ENCODE measurements at regions of chr22 and their contacts with region 1.

Region 1: GRCh38 chr22:46592390-46592872 is 27.8 kb upstream of the GRAMD4 start:
- DNase-seq: peak; percentile 80
- ATAC-seq: peak; percentile 37
- H3K4me3 ChIP-seq: peak overlapping the region; percentile 5 to 78 (median 51)
- H3K4me3 Mint-ChIP-seq: peak overlapping the region; percentile 92
- H3K27ac ChIP-seq: peak overlapping the region; percentile 70 to 75
- H3K27ac Mint-ChIP-seq: peak overlapping the region; percentile 93
- H3K4me1 ChIP-seq: peaks cover 52 to 81% of the 10 kb centered on the region in 2 donors
- H3K4me1 Mint-ChIP-seq: peaks cover 62% of the 10 kb centered on the region
- H3K27me3 ChIP-seq: no peaks in the 10 kb centered on the region
- H3K27me3 Mint-ChIP-seq: no peaks in the 10 kb centered on the region
- CTCF ChIP-seq: no peak

Region 2: DNA sequence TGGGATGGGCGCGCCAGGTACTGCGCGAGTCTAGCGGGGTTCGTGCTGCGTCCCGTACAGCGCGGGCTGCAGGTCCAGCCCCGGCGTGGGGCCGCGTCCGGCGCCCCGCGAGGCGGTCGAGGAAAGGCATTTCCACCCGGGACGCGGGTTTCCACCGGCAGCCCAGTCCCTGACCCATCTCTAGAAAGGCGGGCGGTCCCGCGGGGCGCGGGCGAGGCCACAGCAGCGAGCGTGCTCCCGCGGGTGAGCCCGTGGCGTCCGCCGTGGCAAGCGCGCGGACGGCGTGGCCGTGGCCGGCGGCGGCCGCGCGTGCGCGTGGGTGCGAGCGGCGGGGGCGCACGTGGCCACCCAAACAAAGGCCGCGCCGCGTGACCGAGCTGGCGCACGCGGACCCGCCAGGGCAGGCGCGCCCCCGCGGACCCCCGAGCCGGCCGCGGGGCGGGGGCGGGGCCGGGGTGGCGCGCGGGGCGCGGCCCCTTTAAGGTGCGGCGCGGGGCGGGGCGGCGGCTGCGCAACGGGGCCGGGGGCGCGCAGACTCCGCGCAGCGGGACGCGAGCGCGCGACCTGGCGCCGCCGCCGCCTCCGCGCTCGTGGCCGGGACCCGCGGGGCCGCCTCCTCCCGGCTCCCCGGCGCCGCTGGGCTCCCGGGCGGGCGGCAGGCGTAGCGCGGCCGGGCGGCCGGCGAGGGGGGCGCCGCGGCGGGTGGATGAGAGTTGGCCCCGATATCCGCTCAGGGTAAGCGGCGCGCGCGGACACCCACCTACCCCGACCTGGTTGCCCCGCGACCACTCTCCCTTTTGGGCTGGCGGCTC is 15.7 kb before region 1 on chr22:
- CTCF ChIA-PET with region 1: no interaction called
- POLR2A ChIA-PET with region 1: interaction called, 4 read pairs
- intact Hi-C with region 1: loop called (anchors 1 kb)
- DNase-seq: peak; percentile 79
- ATAC-seq: peak; percentile 76
- H3K4me3 ChIP-seq: peak overlapping the region in 4 of 5 experiments; percentile 52 to 64 (median 61)
- H3K4me3 Mint-ChIP-seq: peak overlapping the region; percentile 84
- H3K27ac ChIP-seq: no peak overlapping the region
- H3K27ac Mint-ChIP-seq: peak overlapping the region; percentile 84
- H3K4me1 ChIP-seq: peaks cover 45 to 54% of the 10 kb centered on the region in 2 donors
- H3K4me1 Mint-ChIP-seq: peaks cover 54% of the 10 kb centered on the region
- H3K27me3 ChIP-seq: no peaks in the 10 kb centered on the region
- H3K27me3 Mint-ChIP-seq: no peaks in the 10 kb centered on the region
- CTCF ChIP-seq: no peak

Region 3: GRCh38 chr22:46613606-46614021 is 21.2 kb after region 1 on chr22:
- CTCF ChIA-PET with region 1: interaction called, 3 read pairs
- POLR2A ChIA-PET with region 1: interaction called, 3 read pairs
- intact Hi-C with region 1: loop called (anchors 2 kb)
- DNase-seq: no peak
- ATAC-seq: peak; percentile 34
- H3K4me3 ChIP-seq: peak overlapping the region; percentile 33 to 64 (median 46)
- H3K4me3 Mint-ChIP-seq: peak overlapping the region; percentile 95
- H3K27ac ChIP-seq: peak overlapping the region; percentile 42 to 67
- H3K27ac Mint-ChIP-seq: peak overlapping the region; percentile 93
- H3K4me1 ChIP-seq: peaks cover 28 to 30% of the 10 kb centered on the region in 2 donors
- H3K4me1 Mint-ChIP-seq: peaks cover 38% of the 10 kb centered on the region
- H3K27me3 ChIP-seq: no peaks in the 10 kb centered on the region
- H3K27me3 Mint-ChIP-seq: no peaks in the 10 kb centered on the region
- CTCF ChIP-seq: no peak

Region 4: DNA sequence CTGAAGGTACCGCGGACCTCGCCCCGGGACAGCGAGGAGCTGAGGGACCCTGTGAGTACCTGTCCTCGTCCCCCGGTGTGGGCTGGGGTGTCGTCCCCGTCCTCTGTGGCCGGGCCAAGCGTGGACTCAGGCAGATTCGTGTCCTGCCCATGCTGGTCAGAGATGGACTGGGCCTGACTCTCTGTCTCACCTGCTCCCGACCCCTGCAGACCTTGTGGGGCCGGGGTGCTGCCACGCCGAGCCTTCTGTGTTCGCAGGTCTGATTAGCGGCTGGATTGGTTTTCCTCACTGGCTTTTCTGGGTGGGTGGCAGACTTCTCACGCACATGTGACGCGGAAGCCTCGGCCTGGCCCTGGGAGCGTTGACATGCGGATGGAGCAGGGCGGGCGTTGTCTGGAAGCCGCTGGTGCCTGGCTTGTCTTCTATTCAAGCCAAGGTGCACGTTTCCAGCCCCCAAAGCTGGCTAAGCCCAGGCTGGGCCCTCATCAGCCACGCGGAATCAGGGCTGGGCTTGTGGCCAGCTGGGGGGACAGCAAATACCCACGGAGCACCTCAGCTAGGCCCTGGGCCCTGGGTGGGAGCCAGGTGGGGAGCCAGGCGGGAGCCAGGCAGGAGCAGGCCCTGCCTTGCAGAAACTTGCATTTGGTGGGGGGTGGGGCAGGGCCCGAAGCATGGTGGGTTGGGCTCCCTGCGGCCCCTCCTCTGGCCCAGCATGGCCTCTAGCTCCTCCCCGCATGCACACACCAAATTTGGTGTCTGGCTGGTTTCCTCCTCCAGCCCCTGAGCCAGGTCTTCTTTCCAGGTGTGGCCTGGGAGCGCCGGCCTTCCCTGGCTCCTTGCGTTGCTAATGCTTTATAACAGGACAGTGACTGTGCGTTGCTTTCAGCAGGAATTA is 34.7 kb after region 1 on chr22:
- CTCF ChIA-PET with region 1: interaction called, 3 read pairs
- POLR2A ChIA-PET with region 1: interaction called, 10 read pairs
- intact Hi-C with region 1: no loop called
- DNase-seq: no peak
- ATAC-seq: no peak
- H3K4me3 ChIP-seq: no peak overlapping the region
- H3K4me3 Mint-ChIP-seq: no peak overlapping the region
- H3K27ac ChIP-seq: no peak overlapping the region
- H3K27ac Mint-ChIP-seq: no peak overlapping the region
- H3K4me1 ChIP-seq: peaks cover 15 to 24% of the 10 kb centered on the region in 2 donors
- H3K4me1 Mint-ChIP-seq: peaks cover 24% of the 10 kb centered on the region
- H3K27me3 ChIP-seq: no peaks in the 10 kb centered on the region
- H3K27me3 Mint-ChIP-seq: no peaks in the 10 kb centered on the region
- CTCF ChIP-seq: no peak

Region 5: DNA sequence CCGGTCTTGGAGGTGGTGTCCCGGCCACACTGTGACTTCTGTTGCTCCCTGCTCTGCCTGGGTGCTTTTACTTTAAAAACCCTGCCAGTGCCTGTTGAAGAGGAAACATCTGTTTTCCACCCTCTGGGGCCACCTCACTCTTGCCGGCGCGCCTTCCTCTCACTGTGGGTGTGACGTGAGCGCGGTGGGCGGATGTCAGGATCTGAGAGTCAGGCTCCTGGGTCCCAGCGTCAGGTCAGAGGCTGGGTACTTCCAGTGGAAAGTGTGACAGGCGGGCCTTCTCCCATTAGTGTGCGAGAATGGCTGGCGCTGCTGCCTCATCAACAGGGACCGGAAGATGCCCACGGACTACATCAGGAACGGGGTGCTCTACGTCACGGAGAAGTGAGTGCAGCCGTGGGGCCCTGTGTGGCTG is 81.9 kb after region 1 on chr22:
- CTCF ChIA-PET with region 1: interaction called, 3 read pairs
- POLR2A ChIA-PET with region 1: interaction called, 5 read pairs
- intact Hi-C with region 1: loop called (anchors 1 kb)
- DNase-seq: peak; percentile 89
- ATAC-seq: peak; percentile 78
- H3K4me3 ChIP-seq: peak overlapping the region; percentile 2 to 40 (median 27)
- H3K4me3 Mint-ChIP-seq: peak overlapping the region; percentile 93
- H3K27ac ChIP-seq: peak overlapping the region in 1 of 2 donors; percentile 65
- H3K27ac Mint-ChIP-seq: peak overlapping the region; percentile 92
- H3K4me1 ChIP-seq: peaks cover 32 to 39% of the 10 kb centered on the region in 2 donors
- H3K4me1 Mint-ChIP-seq: peaks cover 34% of the 10 kb centered on the region
- H3K27me3 ChIP-seq: peaks cover 0 to 21% (median 0%) of the 10 kb centered on the region in 4 experiments
- H3K27me3 Mint-ChIP-seq: no peaks in the 10 kb centered on the region
- CTCF ChIP-seq: no peak

Region 6: DNA sequence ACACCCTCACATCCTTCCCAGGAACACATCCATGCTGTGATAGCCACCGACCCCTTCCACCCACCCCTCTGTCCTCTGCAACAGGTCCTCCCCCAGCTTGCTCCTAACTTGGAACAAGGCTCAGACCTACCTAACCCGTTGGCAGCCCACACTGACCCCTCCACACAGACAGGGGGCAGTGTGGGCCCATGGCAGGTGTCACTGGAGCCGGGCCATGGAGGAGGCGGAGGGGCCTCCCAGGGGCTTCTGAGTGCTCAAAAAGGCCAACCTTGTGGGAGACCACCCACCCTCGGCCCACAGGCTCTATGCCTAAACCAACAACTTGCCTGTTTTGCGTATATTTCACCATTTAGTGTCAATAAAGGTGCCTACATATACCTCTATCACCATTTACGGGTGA is 88.6 kb after region 1 on chr22:
- CTCF ChIA-PET with region 1: interaction called, 3 read pairs
- POLR2A ChIA-PET with region 1: interaction called, 4 read pairs
- intact Hi-C with region 1: loop called (anchors 1 kb)
- DNase-seq: peak; percentile 50
- ATAC-seq: no peak
- H3K4me3 ChIP-seq: no peak overlapping the region
- H3K4me3 Mint-ChIP-seq: no peak overlapping the region
- H3K27ac ChIP-seq: no peak overlapping the region
- H3K27ac Mint-ChIP-seq: no peak overlapping the region
- H3K4me1 ChIP-seq: peaks cover 30 to 34% of the 10 kb centered on the region in 2 donors
- H3K4me1 Mint-ChIP-seq: peaks cover 29% of the 10 kb centered on the region
- H3K27me3 ChIP-seq: peaks cover 0 to 20% (median 0%) of the 10 kb centered on the region in 4 experiments
- H3K27me3 Mint-ChIP-seq: peaks cover 4% of the 10 kb centered on the region
- CTCF ChIP-seq: peak; percentile 47

Region 7: DNA sequence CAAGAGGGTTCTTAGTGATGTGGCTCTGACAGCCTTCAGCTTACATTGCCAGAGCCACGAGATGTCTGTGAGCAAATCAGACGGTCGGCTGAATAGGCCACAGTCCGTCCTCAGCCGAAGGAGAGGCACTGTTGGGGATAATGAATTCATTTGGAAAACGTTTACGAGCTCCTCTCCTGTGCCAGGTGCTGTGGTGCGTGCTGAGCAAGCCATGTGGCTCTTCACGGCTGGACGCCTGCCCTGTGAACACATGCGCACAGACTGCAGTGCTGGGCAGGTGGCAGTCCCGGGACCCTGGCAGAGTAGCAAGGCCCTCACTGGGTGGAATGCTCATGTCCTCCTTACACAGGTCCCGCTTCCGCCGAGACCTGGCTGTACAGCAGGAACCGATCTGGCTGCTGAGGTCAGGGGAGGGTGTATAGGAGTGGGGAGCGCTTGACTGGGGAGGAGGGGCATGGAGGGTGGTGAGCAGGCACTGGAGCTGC is 176.8 kb after region 1 on chr22:
- CTCF ChIA-PET with region 1: no interaction called
- POLR2A ChIA-PET with region 1: interaction called, 17 read pairs
- intact Hi-C with region 1: loop called (anchors 1 kb)
- DNase-seq: peak; percentile 75
- ATAC-seq: peak; percentile 43
- H3K4me3 ChIP-seq: peak overlapping the region in 3 of 5 experiments; percentile 15 to 60 (median 27)
- H3K4me3 Mint-ChIP-seq: peak overlapping the region; percentile 91
- H3K27ac ChIP-seq: peak overlapping the region; percentile 92 to 97
- H3K27ac Mint-ChIP-seq: peak overlapping the region; percentile 99
- H3K4me1 ChIP-seq: peaks cover 87 to 93% of the 10 kb centered on the region in 2 donors
- H3K4me1 Mint-ChIP-seq: peaks cover 86% of the 10 kb centered on the region
- H3K27me3 ChIP-seq: no peaks in the 10 kb centered on the region
- H3K27me3 Mint-ChIP-seq: no peaks in the 10 kb centered on the region
- CTCF ChIP-seq: no peak